ENCODE measurements at regions of chr4 and their contacts with region 1.

Region 1: GRCh38 chr4:186067757-186068385 is 1.1 kb upstream of the TLR3 start:
- DNase-seq: peak; percentile 30 to 85 (median 66)

Region 2: GRCh38 chr4:185987961-185988627 is 79.8 kb before region 1 on chr4:
- intact Hi-C with region 1: no loop called
- DNase-seq: no peak

Region 3: GRCh38 chr4:186029571-186030398 is 38.1 kb before region 1 on chr4:
- intact Hi-C with region 1: no loop called
- DNase-seq: peak in 15 of 42 donors; percentile 11 to 54 (median 31)

Region 4: DNA sequence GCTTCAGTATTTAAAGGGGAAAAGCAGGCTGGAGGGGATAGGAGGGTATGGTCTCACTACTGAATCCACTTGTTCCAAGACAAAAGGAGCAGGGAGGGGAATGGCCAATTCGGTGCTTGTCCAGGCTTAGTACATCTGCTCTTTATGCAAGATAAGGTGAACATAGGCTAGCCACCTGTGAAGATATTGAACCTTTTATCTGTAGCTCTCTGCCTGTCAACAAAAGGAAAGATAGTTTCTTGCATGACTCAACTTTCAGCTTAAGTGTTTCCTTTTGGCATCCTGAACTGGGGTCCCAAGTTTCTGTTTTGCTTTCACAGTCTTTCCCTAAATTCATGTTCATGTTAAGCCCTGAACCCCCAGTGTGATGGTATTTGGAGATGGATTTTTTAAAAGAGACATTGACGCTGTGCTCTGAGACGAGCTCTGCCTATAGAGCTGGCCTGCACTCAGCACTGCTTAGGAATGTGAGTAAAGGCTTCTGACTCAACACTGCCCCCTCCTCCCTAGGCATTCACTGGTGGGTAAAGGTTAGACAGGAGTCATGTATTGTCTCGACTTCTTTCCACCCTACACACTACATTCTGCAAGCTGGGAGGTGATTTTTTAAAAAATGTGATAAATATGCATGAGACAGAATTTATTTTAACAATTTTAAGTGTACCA is 64.8 kb after region 1 on chr4:
- intact Hi-C with region 1: loop called (anchors 5 kb)
- DNase-seq: peak in 11 of 42 donors; percentile 20 to 66 (median 44)

Measured in head of caudate nucleus (tissue), 42 donors.